HEK293 (cell line): ENCODE measurements at regions of chr3 and their contacts with region 1.

Region 1: DNA sequence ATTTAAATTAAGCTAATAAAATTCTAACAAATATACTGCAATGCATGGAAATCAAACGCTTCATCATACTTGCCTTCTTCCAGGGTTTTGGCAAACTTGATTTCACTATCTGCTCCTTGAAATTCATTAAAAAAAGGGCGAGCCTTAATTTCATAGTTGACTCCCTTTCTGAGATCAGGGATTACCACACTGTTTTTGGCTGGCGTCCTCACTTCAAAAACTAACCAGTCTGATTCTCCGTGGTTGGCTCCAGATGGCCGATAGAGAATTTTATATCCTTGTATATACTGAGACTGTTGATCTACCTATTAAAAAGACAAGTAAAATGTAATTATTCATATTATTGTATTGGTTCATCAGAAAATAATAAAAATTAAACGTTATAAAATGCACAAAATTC is 1106.8 kb downstream of the ROBO1 start:
- H3K4me3 ChIP-seq: no peak overlapping the region
- H3K27ac ChIP-seq: no peak overlapping the region
- H3K4me1 ChIP-seq: no peaks in the 10 kb centered on the region
- CTCF ChIP-seq: no peak

Region 2: DNA sequence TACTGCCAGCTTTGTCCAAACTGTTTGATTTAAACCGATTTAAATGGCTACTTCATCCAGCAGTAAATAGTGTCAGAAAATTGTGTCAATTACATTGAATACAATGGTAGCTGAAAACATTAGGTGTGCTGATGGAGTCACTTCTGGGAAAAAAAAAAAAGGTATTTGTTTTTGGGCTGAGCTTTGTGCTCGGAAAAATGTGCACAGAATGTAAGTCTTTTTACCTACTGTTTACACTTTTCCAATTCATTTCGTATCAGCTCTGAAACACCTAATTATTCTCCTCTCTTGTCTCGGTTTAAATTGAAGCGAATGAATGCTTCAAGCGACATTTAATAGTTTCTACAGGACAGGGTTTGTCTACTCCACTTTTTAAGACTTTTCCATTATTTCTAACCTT is 28.4 kb after region 1 on chr3:
- CTCF ChIA-PET with region 1: no interaction called
- POLR2A ChIA-PET with region 1: no interaction called
- H3K4me3 ChIP-seq: no peak overlapping the region
- H3K27ac ChIP-seq: no peak overlapping the region
- H3K4me1 ChIP-seq: no peaks in the 10 kb centered on the region
- CTCF ChIP-seq: no peak

Region 3: DNA sequence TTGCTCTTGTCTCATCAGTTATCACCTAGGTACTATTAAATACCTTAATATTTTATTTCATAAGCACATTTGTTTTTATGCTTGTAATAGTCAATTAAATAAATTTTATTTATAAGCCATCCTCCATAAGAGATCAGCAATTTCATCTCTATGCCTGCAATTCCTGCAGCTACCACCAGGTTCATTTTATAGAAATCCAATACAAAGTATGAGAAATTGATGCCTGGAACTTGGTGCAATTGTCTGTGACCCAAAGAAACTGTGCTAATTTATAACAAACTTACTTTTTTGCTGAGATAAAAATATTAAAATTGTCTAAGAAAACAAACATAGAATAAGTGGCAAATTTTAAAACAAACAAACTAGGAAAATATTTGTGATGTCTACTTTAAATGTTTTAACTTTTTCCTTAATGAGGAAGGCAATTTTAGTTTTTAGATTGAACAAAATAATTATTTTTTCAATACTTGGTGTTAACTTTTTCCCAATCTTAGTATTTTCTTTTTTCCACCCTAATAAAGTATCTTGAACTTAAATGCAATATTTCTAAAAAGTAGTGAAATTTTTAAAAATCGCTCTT is 80.2 kb after region 1 on chr3:
- CTCF ChIA-PET with region 1: no interaction called
- POLR2A ChIA-PET with region 1: no interaction called
- H3K4me3 ChIP-seq: no peak overlapping the region
- H3K27ac ChIP-seq: no peak overlapping the region
- H3K4me1 ChIP-seq: no peaks in the 10 kb centered on the region
- CTCF ChIP-seq: no peak

Region 4: DNA sequence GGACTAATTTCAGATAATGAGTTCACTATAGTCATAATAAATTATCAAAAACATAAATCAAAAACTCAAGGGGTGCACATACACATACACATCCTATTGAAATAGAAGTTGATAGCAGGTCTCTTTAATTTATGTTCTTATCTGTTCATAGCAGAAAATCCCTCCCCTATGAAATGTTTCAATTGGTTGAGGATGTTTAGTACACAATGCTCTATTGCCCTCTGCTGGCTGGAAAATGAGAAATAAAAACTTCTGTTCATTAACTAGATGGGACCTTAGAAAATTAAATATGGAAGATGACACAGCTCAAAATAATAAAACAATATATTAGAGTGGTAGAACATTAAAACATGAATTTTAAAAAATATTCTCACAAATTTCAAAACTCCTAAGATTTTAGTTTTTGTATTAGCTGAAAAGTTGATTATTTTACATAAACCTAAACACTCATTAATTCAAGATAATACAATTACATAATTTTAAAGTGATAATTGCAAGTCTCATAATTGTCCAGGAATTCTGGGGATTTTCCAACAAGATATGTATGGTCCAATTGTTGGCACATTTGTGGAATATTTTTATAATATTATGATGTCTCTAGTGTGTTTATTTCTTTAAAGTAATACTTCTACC is 371.8 kb after region 1 on chr3:
- CTCF ChIA-PET with region 1: interaction called, 12 read pairs
- POLR2A ChIA-PET with region 1: no interaction called
- H3K4me3 ChIP-seq: no peak overlapping the region
- H3K27ac ChIP-seq: no peak overlapping the region
- H3K4me1 ChIP-seq: no peaks in the 10 kb centered on the region
- CTCF ChIP-seq: no peak